ENCODE measurements at regions of chr16 and their contacts with region 1.

Region 1: GRCh38 chr16:30922960-30923535 is 324 bp upstream of the FBXL19 start:
- DNase-seq: peak; percentile 98
- ATAC-seq: peak; percentile 76
- H3K4me3 Mint-ChIP-seq: peak overlapping the region; percentile 88
- H3K27ac Mint-ChIP-seq: peak overlapping the region; percentile 100
- H3K4me1 Mint-ChIP-seq: peaks cover 20% of the 10 kb centered on the region
- H3K27me3 Mint-ChIP-seq: no peaks in the 10 kb centered on the region

Region 2: GRCh38 chr16:30557957-30558788 is 364.9 kb before region 1 on chr16 and contains the start of gene ZNF764:
- CTCF ChIA-PET with region 1: no interaction called
- POLR2A ChIA-PET with region 1: no interaction called
- intact Hi-C with region 1: loop called in 1 of 2 experiments (anchors 1 kb)
- DNase-seq: peak; percentile 99
- ATAC-seq: peak; percentile 96
- H3K4me3 Mint-ChIP-seq: peak within 1 kb of the TSS; percentile 85
- H3K27ac Mint-ChIP-seq: peak within 1 kb of the TSS; percentile 94
- H3K4me1 Mint-ChIP-seq: peaks cover 44% of the 10 kb centered on the region
- H3K27me3 Mint-ChIP-seq: no peaks in the 10 kb centered on the region
- total RNA-seq, gene ZNF764: 8.0 to 11.2 TPM

Region 3: DNA sequence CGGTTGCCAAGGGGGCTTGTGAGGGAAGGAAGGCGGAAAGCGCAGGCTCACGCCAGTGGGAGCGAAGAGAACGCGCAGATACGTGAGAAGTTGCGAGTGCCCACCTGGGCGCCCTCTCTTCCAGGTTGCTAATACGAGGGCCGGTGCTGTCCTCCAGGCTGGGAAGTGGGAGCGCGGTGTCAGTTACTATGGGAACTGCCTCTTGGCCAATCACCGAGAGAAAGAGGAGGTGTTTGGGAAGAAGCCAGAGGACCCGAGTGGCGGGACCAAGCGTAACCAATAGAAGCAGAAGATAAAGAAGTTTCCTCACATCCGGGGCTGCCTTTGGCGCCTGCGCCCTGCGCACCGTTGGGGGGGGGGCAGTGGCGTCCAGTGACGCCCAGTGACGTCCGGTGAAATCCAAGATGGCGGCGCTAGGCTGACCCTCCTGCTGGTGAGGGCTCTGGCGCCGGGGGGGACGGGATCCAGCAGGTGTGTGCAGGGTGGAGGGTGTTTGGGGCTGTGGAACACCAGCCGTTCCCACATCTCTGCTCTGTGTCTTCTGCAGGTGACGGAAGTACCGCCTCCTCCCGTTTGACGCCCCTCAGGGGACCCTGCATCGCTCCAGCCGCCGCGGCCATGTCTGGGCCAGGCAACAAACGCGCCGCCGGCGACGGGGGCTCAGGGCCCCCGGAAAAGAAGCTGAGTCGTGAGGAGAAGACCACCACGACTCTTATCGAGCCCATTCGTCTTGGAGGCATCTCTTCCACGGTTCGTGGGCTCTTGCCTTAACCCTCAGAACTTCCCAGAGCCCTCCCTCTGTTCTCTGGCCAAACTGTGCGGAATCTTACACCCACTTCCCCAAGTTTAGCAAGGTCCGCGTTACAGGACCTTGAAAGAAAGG is 160.9 kb before region 1 on chr16 and contains the starts of genes CFAP119 and RNF40:
- CTCF ChIA-PET with region 1: no interaction called
- POLR2A ChIA-PET with region 1: no interaction called
- intact Hi-C with region 1: loop called (anchors 1 kb)
- DNase-seq: peak; percentile 94
- ATAC-seq: peak; percentile 98
- H3K4me3 Mint-ChIP-seq: peak within 1 kb of the TSS; percentile 90
- H3K27ac Mint-ChIP-seq: peak within 1 kb of the TSS; percentile 83
- H3K4me1 Mint-ChIP-seq: peaks cover 25% of the 10 kb centered on the region
- H3K27me3 Mint-ChIP-seq: no peaks in the 10 kb centered on the region
- total RNA-seq, gene CFAP119: 1.7 to 3.1 TPM
- total RNA-seq, gene RNF40: 72.3 to 85.5 TPM

Region 4: GRCh38 chr16:30893744-30894539 is 29.1 kb before region 1 on chr16 and contains the start of gene BCL7C:
- CTCF ChIA-PET with region 1: no interaction called
- POLR2A ChIA-PET with region 1: no interaction called
- intact Hi-C with region 1: loop called (anchors 1 kb)
- DNase-seq: peak; percentile 92
- ATAC-seq: peak; percentile 74
- H3K4me3 Mint-ChIP-seq: peak within 1 kb of the TSS; percentile 84
- H3K27ac Mint-ChIP-seq: peak within 1 kb of the TSS; percentile 88
- H3K4me1 Mint-ChIP-seq: peaks cover 35% of the 10 kb centered on the region
- H3K27me3 Mint-ChIP-seq: no peaks in the 10 kb centered on the region
- total RNA-seq, gene BCL7C: 19.5 to 20.4 TPM

Region 5: DNA sequence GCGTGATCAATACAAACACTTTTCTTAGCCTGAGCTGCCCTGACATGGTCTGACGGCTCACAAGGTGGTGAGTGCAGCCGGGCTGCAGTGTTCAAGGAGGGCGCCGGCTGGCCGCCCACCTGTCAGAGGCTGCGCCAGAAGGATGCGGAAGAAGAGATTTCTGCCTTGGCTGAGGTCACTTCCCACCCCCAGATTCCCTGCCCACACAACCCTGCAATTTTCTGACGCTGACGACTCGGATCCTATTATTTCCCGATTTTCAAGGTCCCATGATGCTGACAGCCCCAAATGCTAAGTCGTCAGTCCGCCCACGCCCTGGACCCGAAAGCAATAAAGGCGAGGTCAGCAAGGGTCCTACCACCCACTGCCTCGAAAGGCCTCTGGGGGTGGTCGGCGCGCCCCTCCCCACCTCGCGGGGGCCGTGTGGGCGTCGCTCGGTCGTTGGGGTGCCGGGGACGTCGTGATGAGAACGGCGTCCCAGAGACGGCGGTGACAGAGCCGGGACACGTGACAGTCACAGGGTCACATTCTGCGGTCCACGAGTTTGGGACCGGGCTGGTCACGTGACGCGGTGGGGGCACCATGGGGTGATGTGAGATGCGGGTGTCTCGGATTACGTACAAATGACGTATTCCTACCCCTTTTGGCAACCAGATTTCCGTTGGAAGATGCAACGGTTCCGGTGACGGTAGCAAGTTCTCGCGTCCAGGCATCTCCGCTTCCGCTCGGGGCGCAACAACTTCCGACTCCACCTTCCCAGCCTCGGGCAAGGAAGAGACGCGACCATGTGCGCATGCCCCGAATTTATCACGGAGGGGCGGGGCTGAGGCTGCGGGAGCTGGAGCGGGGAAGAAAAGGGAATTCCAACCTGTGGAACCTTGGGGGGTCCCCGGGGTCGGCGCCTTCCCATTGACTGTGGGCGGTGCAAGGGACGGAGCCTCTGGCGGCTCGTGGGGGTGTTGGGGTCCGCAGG is 110.0 kb after region 1 on chr16 and contains the start of gene STX4:
- CTCF ChIA-PET with region 1: no interaction called
- POLR2A ChIA-PET with region 1: no interaction called
- intact Hi-C with region 1: loop called in 1 of 2 experiments (anchors 1 kb)
- DNase-seq: peak; percentile 99
- ATAC-seq: peak; percentile 89
- H3K4me3 Mint-ChIP-seq: peak within 1 kb of the TSS; percentile 96
- H3K27ac Mint-ChIP-seq: peak within 1 kb of the TSS; percentile 93
- H3K4me1 Mint-ChIP-seq: peaks cover 15% of the 10 kb centered on the region
- H3K27me3 Mint-ChIP-seq: no peaks in the 10 kb centered on the region
- total RNA-seq, gene STX4: 29.2 to 35.9 TPM

Region 6: DNA sequence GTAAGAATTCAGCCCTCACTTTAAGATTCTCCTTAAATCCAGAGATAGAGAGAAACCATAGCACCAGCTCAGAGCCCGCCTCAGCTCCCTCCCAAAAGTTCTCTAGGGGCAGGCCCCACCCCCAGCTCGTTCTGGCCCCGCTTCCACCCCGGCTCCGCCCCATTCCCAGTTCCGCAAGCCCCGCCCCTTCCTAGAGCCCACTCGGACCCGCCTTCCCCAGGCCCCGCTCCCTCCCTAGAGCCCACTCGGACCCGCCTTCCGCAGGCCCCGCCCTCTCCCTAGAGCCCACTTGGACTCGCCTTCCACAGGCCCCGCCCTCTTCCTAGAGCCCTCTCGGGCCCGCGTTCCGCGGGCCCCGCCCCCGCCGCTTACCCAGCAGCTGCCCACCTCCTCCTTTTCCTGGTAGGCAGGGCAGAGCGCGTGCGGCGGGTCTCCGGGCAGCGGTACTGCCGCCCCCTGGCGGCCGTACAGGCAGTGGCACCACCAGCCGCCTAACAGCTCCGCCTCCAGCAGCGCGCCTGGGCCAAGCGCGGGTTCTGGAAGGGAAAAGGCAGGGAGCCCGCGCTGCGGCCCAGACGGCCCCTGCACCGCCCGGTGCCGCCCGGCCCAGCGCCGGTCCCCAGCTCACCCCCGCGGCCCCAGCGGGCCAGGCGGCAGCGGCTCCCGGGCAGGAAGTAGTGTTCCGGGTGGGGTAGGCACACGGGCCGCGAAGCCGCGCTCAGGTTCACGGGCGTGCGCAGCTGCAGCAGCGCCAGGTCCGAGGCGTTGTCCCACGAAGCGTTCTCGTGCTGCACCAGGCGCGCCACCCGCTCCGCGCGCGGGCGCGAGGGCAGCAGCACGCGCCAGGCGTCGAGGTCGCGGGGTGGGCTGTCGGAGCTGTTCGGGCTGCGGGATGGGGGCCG is 219.3 kb after region 1 on chr16:
- CTCF ChIA-PET with region 1: no interaction called
- POLR2A ChIA-PET with region 1: no interaction called
- intact Hi-C with region 1: loop called in 1 of 2 experiments (anchors 1 kb)
- DNase-seq: peak; percentile 100
- ATAC-seq: peak; percentile 96
- H3K4me3 Mint-ChIP-seq: peak overlapping the region; percentile 62
- H3K27ac Mint-ChIP-seq: peak overlapping the region; percentile 80
- H3K4me1 Mint-ChIP-seq: peaks cover 12% of the 10 kb centered on the region
- H3K27me3 Mint-ChIP-seq: no peaks in the 10 kb centered on the region